IMR-90 (cell line): ENCODE measurements at regions of chr1 and their contacts with region 1.

Region 1: DNA sequence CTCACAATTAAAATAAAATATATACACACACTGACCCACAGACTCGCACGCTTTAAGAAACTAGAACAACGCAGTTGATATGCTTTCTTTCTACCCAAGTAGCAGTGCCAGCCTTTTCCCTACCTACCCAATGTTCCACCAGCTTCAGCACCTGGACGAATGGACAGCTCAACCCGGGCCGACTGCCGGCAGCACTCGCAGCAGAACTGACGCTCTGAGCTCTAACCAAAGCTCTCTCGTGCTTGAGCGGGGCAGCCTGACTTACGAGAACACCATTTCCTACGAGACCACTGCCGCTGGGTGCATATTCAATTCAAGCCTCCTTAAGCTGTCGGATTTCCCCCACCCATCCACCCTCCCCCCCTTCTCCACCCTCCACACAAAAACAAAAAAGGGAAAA is 127.4 kb upstream of the DPYD start:
- DNase-seq: peak; percentile 92
- ATAC-seq: peak; percentile 64
- H3K4me3 ChIP-seq: peak overlapping the region; percentile 44
- H3K27ac ChIP-seq: no peak overlapping the region
- H3K4me1 ChIP-seq: peaks cover 6% of the 10 kb centered on the region
- H3K27me3 ChIP-seq: no peaks in the 10 kb centered on the region
- CTCF ChIP-seq: peak; percentile 19; the same call in 1 of the 2 replicates
- POLR2A ChIP-seq: no peak
- RAD21 ChIP-seq: peak; percentile 45

Region 2: GRCh38 chr1:97137862-97138514 is 910.3 kb before region 1 on chr1:
- CTCF ChIA-PET with region 1: no interaction called
- POLR2A ChIA-PET with region 1: no interaction called
- dilution Hi-C with region 1: no loop called
- in situ Hi-C with region 1: no loop called
- intact Hi-C with region 1: loop called (anchors 5 kb)
- DNase-seq: peak; percentile 78
- ATAC-seq: peak; percentile 96
- H3K4me3 ChIP-seq: no peak overlapping the region
- H3K27ac ChIP-seq: no peak overlapping the region
- H3K4me1 ChIP-seq: peaks cover 3% of the 10 kb centered on the region
- H3K27me3 ChIP-seq: no peaks in the 10 kb centered on the region
- CTCF ChIP-seq: peak; percentile 69
- POLR2A ChIP-seq: no peak
- RAD21 ChIP-seq: peak; percentile 65

Region 3: DNA sequence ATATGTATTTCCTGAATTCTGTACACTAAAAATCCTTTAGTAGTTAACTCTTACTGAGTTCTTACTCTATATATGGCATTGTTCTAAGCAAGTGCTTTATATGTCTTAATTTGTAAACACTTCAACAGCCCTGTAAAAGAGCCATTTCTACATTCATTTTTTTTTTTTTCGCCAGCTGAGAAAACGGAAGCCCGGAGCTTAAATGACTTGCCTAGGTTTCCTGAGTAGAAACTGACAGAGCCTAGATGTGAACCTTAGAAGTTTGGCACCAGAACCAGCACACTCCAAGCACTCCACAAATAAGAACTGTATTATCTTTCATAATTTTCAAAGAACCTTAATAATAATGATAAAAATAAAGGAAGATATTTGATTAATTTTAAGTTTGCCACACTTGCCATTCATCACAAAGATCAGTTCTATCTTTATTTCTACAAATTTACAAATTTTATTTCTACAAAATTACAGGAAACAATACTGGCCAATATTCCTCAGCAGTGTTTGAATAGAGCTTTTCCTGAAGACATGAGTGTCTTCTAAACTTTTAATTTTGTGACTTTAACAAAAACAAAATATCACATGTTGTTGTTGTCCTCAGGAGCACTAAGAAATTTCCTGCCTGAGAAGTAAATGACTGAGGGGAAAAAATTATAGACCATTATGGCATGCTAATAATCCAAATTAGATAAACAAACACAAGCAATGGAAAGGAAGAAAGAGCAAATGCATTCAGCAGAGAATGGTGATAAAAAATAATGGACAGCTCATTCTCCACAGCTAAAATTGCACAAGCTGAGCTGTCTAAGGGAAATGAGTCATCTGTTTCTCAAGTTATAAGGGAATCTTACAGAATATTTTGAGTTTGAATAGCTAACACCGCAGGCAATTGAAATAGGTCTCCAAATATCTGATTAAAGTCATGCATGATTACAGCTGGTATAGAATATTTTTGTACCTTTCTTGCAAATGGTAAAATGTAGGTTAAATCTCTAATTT is 198.6 kb before region 1 on chr1:
- CTCF ChIA-PET with region 1: no interaction called
- POLR2A ChIA-PET with region 1: no interaction called
- dilution Hi-C with region 1: no loop called
- in situ Hi-C with region 1: no loop called
- intact Hi-C with region 1: loop called (anchors 10 kb)
- DNase-seq: peak; percentile 89
- ATAC-seq: peak; percentile 90
- H3K4me3 ChIP-seq: no peak overlapping the region
- H3K27ac ChIP-seq: no peak overlapping the region
- H3K4me1 ChIP-seq: no peaks in the 10 kb centered on the region; the same call in 1 of the 2 replicates
- H3K27me3 ChIP-seq: no peaks in the 10 kb centered on the region
- CTCF ChIP-seq: no peak
- POLR2A ChIP-seq: no peak
- RAD21 ChIP-seq: no peak

Region 4: DNA sequence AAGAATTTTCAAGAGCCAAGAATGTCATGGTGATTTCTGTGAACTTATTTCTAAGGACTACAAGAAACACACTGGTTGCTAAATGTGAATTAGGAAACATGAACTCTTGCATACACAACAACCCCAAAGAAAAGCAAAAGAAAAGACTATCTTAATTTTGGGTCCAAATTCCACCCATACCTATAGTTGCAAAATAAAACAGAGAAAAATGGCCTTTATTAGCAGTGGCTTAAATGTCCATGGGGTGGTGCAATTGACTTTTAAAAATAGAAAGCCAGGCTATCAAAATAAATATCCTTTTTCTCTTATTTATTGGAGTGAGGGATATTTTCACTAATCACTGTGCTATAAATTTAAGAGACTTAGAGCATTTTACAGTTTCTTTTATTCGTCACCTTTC is 46.5 kb before region 1 on chr1:
- CTCF ChIA-PET with region 1: no interaction called
- POLR2A ChIA-PET with region 1: interaction called, 4 read pairs
- dilution Hi-C with region 1: no loop called
- in situ Hi-C with region 1: no loop called
- intact Hi-C with region 1: loop called (anchors 1 kb)
- DNase-seq: peak; percentile 18
- ATAC-seq: peak; percentile 19; the same call in 1 of the 2 replicates
- H3K4me3 ChIP-seq: no peak overlapping the region
- H3K27ac ChIP-seq: no peak overlapping the region
- H3K4me1 ChIP-seq: peaks cover 2% of the 10 kb centered on the region; the same call in 1 of the 2 replicates
- H3K27me3 ChIP-seq: no peaks in the 10 kb centered on the region
- CTCF ChIP-seq: peak; percentile 52
- POLR2A ChIP-seq: no peak
- RAD21 ChIP-seq: peak; percentile 60